ENCODE measurements at regions of chr2 and their contacts with region 1.

Region 1: DNA sequence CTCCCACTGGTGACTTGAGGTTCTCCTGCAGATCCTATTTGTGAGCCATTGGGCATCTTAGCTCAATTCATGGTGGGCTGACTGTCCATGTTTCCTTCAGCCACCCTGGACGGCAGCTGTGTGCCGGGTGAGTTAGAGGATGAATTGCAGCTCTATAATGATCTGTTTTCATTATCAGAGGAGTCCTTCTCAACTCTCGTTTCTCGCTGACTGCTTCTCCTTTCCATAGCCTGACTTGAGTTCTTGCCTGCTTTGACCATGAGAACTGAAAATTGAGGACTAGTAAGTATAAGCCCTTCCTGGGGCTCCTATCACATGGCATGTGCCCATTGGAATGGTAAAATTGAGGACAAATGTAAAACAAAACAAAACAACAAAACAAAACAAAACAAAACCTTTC is 121.8 kb downstream of the CDC42EP3 start:
- DNase-seq: no peak
- H3K4me3 ChIP-seq: no peak overlapping the region
- H3K27ac ChIP-seq: no peak overlapping the region
- H3K4me1 ChIP-seq: peaks cover 13% of the 10 kb centered on the region
- CTCF ChIP-seq: no peak

Region 2: DNA sequence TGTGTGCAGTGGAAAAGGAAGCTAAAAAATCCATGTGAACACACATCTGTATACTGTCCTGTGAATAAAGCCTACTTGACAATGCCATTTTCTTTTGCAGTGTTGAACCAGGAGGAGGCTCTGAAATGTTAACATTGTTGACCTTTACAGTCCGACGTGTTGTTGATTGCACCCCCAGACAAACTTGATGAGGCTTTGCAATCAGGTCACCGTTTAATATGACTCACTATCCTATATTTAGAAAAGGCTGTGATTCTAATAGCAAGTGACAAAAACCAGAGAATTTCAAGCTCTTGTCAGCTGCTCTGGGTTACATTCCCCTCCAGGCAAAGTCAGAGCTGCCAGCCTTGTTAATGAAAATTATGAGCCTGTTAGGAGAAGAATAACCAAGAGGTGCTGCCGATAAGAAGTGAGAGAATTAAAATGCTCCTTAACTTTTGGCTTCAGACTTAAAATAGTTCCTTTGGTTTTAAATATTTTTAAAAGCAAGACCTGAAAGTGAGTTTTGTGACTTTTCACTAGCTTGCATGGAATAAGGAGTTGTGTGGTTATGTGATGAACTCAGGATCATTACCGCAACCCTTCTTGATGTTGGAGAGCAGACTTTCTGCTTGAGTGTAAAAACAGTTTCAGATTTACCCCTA is 43.1 kb before region 1 on chr2:
- CTCF ChIA-PET with region 1: no interaction called
- POLR2A ChIA-PET with region 1: no interaction called
- intact Hi-C with region 1: no loop called
- DNase-seq: no peak
- H3K4me3 ChIP-seq: no peak overlapping the region
- H3K27ac ChIP-seq: no peak overlapping the region
- H3K4me1 ChIP-seq: no peaks in the 10 kb centered on the region
- CTCF ChIP-seq: no peak

Region 3: DNA sequence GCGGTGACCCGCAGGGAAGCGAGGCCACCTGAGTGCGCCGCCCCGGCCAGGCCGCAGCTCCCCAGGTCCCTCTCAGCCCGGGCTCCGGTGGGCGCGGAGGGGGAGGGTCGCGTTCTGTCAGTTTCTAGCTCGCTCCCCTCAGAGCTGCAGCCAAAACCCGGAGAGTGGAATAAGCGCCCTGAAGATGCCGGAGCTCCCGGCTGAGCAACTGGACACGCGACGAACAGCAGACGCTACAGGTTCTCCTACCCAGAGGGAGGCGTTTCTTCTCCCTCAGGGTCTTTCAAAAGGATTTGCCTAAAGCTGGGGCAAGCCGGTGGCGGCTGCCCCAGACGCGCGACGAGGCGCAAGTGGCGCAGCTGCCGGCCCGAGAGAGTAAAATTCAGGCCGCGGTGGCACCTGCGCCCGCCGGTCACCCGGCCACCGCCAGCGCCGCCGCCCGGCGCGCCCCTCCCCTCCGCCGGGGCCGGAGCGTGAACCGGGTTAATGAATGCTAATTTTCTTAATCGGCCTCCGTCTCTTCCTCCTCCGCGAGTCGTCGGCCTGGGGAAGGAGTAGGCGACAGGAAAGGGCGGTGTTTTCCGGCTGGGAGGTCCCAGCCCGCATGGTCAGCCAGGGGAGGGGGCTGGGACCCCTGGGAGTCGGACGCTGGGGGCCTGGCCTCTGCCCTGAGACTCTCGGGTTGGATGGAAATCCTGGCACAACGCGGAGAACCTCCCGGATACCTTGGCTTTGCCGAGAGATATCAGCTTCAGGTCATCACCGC is 122.7 kb after region 1 on chr2:
- CTCF ChIA-PET with region 1: no interaction called
- POLR2A ChIA-PET with region 1: no interaction called
- intact Hi-C with region 1: loop called (anchors 5 kb)
- DNase-seq: peak; percentile 88
- H3K4me3 ChIP-seq: peak overlapping the region; percentile 94
- H3K27ac ChIP-seq: peak overlapping the region; percentile 59
- H3K4me1 ChIP-seq: peaks cover 44% of the 10 kb centered on the region
- CTCF ChIP-seq: no peak

Region 4: GRCh38 chr2:37809525-37809924 is 259.9 kb after region 1 on chr2:
- CTCF ChIA-PET with region 1: no interaction called
- POLR2A ChIA-PET with region 1: no interaction called
- intact Hi-C with region 1: loop called (anchors 1 kb)
- DNase-seq: no peak
- H3K4me3 ChIP-seq: no peak overlapping the region
- H3K27ac ChIP-seq: no peak overlapping the region
- H3K4me1 ChIP-seq: no peaks in the 10 kb centered on the region
- CTCF ChIP-seq: peak; percentile 74

Region 5: GRCh38 chr2:37832590-37833197 is 283.1 kb after region 1 on chr2:
- CTCF ChIA-PET with region 1: no interaction called
- POLR2A ChIA-PET with region 1: no interaction called
- intact Hi-C with region 1: loop called (anchors 2 kb)
- DNase-seq: peak; percentile 75
- H3K4me3 ChIP-seq: no peak overlapping the region
- H3K27ac ChIP-seq: no peak overlapping the region
- H3K4me1 ChIP-seq: no peaks in the 10 kb centered on the region
- CTCF ChIP-seq: peak; percentile 90